ENCODE measurements at regions of chr1 and their contacts with region 1.

Region 1: GRCh38 chr1:15090373-15090772 is 63.2 kb upstream of the TMEM51 start:
- DNase-seq: no peak
- H3K4me3 ChIP-seq: no peak overlapping the region
- H3K27ac ChIP-seq: no peak overlapping the region
- H3K4me1 ChIP-seq: peaks cover 9% of the 10 kb centered on the region
- H3K27me3 ChIP-seq: no peaks in the 10 kb centered on the region
- CTCF ChIP-seq: no peak

Region 2: GRCh38 chr1:14778898-14779865 is 311.2 kb before region 1 on chr1:
- dilution Hi-C with region 1: loop called (anchors 25 kb)
- DNase-seq: no peak
- H3K4me3 ChIP-seq: no peak overlapping the region
- H3K27ac ChIP-seq: no peak overlapping the region
- H3K4me1 ChIP-seq: no peaks in the 10 kb centered on the region
- H3K27me3 ChIP-seq: no peaks in the 10 kb centered on the region
- CTCF ChIP-seq: peak; percentile 70 to 85 (median 81)